ENCODE measurements at regions of chr22 and their contacts with region 1.

Region 1: DNA sequence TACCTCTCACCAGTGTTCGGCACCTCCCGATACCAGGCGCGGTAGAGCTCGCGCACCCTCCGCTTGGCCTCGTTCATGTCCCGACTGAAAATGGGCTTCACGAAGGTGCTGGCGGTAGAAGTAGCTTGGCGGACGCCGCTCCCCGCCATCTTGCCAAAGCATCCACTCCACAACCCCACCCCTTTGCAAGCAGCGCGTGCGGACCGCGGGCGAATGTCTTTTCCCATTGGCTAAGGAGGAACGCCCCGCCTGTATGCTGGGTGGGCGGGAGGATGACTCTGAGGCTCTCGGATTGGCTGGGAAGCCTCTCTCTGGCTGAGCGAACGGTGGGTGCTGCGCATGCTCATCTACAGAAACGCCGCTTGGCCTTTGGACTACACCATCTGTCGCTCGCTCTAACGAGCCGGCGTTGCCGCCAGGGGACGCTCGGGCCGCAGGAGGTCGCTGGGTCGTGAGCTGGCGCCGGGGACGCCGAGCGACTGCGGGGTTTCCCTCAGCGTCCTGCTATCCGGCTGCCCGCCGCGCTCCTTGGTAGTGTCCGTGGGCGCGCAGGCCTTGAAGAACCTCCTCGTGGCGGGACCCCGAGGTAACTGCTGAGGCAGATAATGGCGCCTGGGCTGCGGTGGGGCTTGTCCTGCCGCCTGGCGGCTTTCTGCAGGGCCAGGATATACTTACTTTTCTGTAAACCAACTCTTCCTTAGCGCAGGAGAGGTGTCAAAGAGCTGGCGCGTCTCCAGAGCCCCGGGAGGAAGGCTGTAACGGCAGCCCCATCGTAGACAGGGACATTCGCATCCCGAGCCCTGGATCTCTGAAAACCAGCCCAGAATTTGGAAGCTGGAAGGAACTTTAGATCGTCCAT is at the start of gene NDUFA6:
- DNase-seq: peak; percentile 91 to 98
- ATAC-seq: peak; percentile 96 to 98
- H3K4me3 ChIP-seq: peak within 1 kb of the TSS; percentile 70
- H3K27ac ChIP-seq: peak within 1 kb of the TSS; percentile 84 to 89
- H3K4me1 ChIP-seq: peaks cover 4% of the 10 kb centered on the region; the same call in 1 of the 3 replicates
- CTCF ChIP-seq: peak; percentile 87
- EP300 ChIP-seq: no peak
- POLR2A ChIP-seq: peak; percentile 88
- RAD21 ChIP-seq: peak; percentile 65 to 84
- polyA plus RNA-seq, gene NDUFA6: 70.7 and 99.0 TPM in 2 replicates

Region 2: GRCh38 chr22:42079319-42080251 is 11.2 kb before region 1 on chr22 and contains the start of gene SMDT1:
- CTCF ChIA-PET with region 1: interaction called, 23 read pairs
- POLR2A ChIA-PET with region 1: interaction called, 18 read pairs
- DNase-seq: peak; percentile 97
- ATAC-seq: peak; percentile 94 to 96
- H3K4me3 ChIP-seq: peak within 1 kb of the TSS; percentile 62
- H3K27ac ChIP-seq: peak within 1 kb of the TSS; percentile 85 to 92
- H3K4me1 ChIP-seq: peaks cover 3% of the 10 kb centered on the region; the same call in 1 of the 3 replicates
- CTCF ChIP-seq: no peak
- EP300 ChIP-seq: no peak
- POLR2A ChIP-seq: peak; percentile 64
- RAD21 ChIP-seq: no peak
- polyA plus RNA-seq, gene SMDT1: 26.7 and 27.1 TPM in 2 replicates

Region 3: DNA sequence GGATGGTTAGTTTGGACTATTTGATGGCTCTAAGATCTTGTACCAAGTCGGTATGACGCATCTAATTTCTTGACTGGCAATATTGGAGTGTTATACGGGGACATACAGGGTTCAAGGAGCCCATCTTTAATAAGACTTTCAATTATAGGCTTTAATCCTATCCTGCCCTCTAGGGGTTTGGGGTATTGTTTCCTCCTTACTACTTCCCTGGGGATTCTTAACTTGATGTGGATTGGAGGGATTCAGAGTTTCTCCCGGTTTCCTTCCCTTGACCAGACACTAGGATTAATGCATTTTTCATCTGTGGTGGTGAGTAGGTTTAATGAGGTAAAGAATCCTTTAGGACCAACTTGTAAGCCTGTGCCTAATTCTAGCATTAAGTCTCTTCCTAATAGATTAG is 21.0 kb after region 1 on chr22:
- CTCF ChIA-PET with region 1: interaction called, 22 read pairs
- POLR2A ChIA-PET with region 1: no interaction called
- DNase-seq: no peak
- ATAC-seq: no peak
- H3K4me3 ChIP-seq: no peak overlapping the region
- H3K27ac ChIP-seq: no peak overlapping the region
- H3K4me1 ChIP-seq: no peaks in the 10 kb centered on the region
- CTCF ChIP-seq: no peak
- EP300 ChIP-seq: no peak
- POLR2A ChIP-seq: no peak
- RAD21 ChIP-seq: no peak

Region 4: GRCh38 chr22:42116848-42117424 is 26.1 kb after region 1 on chr22:
- CTCF ChIA-PET with region 1: interaction called, 22 read pairs
- POLR2A ChIA-PET with region 1: no interaction called
- DNase-seq: no peak
- ATAC-seq: no peak
- H3K4me3 ChIP-seq: no peak overlapping the region
- H3K27ac ChIP-seq: no peak overlapping the region
- H3K4me1 ChIP-seq: no peaks in the 10 kb centered on the region
- CTCF ChIP-seq: no peak
- EP300 ChIP-seq: no peak
- POLR2A ChIP-seq: no peak
- RAD21 ChIP-seq: peak in 1 of 2 experiments; percentile 3; a peak in 1 of 5 replicates

Region 5: GRCh38 chr22:42437488-42438292 is 346.9 kb after region 1 on chr22:
- CTCF ChIA-PET with region 1: interaction called, 16 read pairs
- POLR2A ChIA-PET with region 1: interaction called, 3 read pairs
- DNase-seq: peak; percentile 54 to 58
- ATAC-seq: peak; percentile 81 to 93
- H3K4me3 ChIP-seq: peak overlapping the region; percentile 50
- H3K27ac ChIP-seq: peak overlapping the region; percentile 71 to 72; a peak in 5 of 6 replicates
- H3K4me1 ChIP-seq: peaks cover 3% of the 10 kb centered on the region; the same call in 1 of the 3 replicates
- CTCF ChIP-seq: peak; percentile 82
- EP300 ChIP-seq: no peak
- POLR2A ChIP-seq: no peak
- RAD21 ChIP-seq: peak; percentile 93 to 94

Measured in A549 (cell line).